T-cell (primary cell): ENCODE measurements at regions of chr12 and their contacts with region 1.

Region 1: DNA sequence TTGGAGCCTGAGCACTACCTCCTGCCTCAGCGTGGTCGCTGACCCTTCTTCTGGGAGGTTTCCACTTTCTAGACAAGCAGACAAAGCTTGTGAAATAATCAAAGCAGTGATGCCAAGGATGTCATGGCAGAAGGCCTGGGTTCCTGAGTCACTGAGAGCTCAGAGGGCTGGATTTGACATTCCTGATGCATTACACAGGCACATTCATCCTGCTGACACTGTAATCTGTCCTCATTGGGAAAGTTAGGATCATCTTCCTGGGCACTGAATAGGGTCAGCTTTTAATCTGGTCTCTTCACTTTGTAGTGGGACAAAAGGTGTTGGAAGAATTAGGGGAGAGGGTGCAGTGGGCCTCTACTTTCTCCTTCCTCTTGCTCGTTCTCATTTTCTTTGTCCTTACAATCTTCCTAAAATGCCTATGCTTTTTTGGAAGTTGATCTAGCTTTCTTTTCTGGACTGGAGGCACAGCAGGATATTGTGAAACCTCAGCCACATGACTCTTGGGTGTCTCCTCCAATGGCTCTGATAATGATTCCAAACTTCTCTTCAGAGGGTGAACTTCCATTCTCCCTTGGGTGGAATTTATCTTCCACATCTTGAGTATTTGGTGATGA is 29.6 kb downstream of the EEA1 start:
- DNase-seq: no peak
- ATAC-seq: no peak
- H3K4me3 ChIP-seq: no peak overlapping the region
- H3K4me3 Mint-ChIP-seq: no peak overlapping the region
- H3K27ac ChIP-seq: no peak overlapping the region
- H3K27ac Mint-ChIP-seq: peak overlapping the region; percentile 64 to 70
- H3K4me1 ChIP-seq: peaks cover 0 to 7% of the 10 kb centered on the region in 2 experiments
- H3K4me1 Mint-ChIP-seq: peaks cover 30 to 34% (median 33%) of the 10 kb centered on the region in 3 donors
- H3K27me3 ChIP-seq: no peaks in the 10 kb centered on the region
- H3K27me3 Mint-ChIP-seq: no peaks in the 10 kb centered on the region

Region 2: DNA sequence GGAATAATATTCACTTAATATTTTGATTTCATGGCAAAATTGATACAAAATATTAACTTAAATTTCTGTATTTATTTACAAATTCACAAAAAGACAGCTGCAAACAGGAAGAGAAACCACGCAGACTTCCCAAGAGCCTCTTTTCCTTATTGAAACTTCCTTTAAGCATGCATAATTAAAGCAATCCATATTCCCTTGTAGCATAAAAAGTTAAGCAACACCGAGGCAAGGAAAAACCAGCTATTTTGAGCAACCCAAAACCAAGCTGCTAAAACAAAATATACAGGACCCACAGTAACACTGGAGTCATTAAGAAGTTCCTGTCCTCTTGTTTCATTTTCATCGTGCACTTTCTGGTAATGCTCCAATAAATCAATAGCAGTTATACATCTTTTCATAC is 28.4 kb before region 1 on chr12:
- CTCF ChIA-PET with region 1: interaction called, 3 to 11 read pairs
- POLR2A ChIA-PET with region 1: no interaction called
- DNase-seq: no peak
- ATAC-seq: no peak
- H3K4me3 ChIP-seq: no peak overlapping the region
- H3K4me3 Mint-ChIP-seq: no peak overlapping the region
- H3K27ac ChIP-seq: no peak overlapping the region
- H3K27ac Mint-ChIP-seq: no peak overlapping the region
- H3K4me1 ChIP-seq: peaks cover 0 to 2% of the 10 kb centered on the region in 2 experiments
- H3K4me1 Mint-ChIP-seq: peaks cover 13 to 27% (median 22%) of the 10 kb centered on the region in 3 donors
- H3K27me3 ChIP-seq: no peaks in the 10 kb centered on the region
- H3K27me3 Mint-ChIP-seq: no peaks in the 10 kb centered on the region

Region 3: GRCh38 chr12:92886131-92886530 is 13.4 kb before region 1 on chr12:
- CTCF ChIA-PET with region 1: no interaction called
- POLR2A ChIA-PET with region 1: no interaction called
- DNase-seq: no peak
- ATAC-seq: no peak
- H3K4me3 ChIP-seq: no peak overlapping the region
- H3K4me3 Mint-ChIP-seq: no peak overlapping the region
- H3K27ac ChIP-seq: no peak overlapping the region
- H3K27ac Mint-ChIP-seq: no peak overlapping the region
- H3K4me1 ChIP-seq: no peaks in the 10 kb centered on the region
- H3K4me1 Mint-ChIP-seq: peaks cover 0 to 19% (median 10%) of the 10 kb centered on the region in 3 donors
- H3K27me3 ChIP-seq: no peaks in the 10 kb centered on the region
- H3K27me3 Mint-ChIP-seq: no peaks in the 10 kb centered on the region

Region 4: DNA sequence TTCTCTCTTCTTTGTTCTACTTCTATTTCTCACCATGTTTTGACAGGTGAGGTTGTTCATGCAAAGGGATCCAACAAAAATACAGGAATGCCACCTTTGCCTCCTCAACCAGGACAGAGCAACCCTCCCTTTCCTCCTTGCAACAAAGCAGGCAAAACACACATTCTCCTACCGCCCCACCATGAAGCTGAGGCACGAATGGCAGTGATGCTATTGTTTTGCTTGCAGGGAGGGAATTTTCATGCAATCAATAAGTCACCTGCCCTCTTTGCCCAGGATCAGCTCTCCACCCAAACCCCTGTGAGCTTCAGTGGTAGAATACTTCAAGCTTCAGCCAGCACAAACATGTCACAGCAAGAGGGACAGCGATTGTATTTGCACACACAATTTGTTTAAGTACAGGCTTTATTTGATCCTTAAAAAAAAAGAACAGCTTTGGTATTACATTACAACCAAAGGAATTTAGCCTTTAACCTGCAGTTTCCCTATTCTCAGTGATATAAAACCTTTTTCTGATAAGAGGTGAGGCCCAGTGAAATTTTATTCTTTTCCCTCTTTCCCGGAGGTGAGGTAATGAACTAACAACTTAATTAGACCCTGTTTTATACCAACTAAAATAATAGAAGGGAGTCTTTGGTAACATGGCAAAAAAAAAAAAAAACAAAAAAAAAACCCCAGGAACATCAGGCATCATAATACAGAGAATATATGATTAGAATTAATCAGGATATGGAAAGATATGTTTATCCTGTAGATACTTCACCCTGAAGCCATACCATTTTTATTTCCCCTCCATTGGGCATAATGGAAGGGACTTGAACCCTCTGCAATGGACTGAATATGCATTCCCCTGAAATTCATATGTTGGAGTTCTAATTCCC is 116.6 kb after region 1 on chr12:
- CTCF ChIA-PET with region 1: no interaction called
- POLR2A ChIA-PET with region 1: interaction called in 1 of 2 experiments, 12 read pairs
- DNase-seq: no peak
- ATAC-seq: no peak
- H3K4me3 ChIP-seq: no peak overlapping the region
- H3K4me3 Mint-ChIP-seq: no peak overlapping the region
- H3K27ac ChIP-seq: no peak overlapping the region
- H3K27ac Mint-ChIP-seq: no peak overlapping the region
- H3K4me1 ChIP-seq: no peaks in the 10 kb centered on the region
- H3K4me1 Mint-ChIP-seq: no peaks in the 10 kb centered on the region
- H3K27me3 ChIP-seq: peaks cover 0 to 5% of the 10 kb centered on the region in 2 experiments
- H3K27me3 Mint-ChIP-seq: peaks cover 0 to 5% of the 10 kb centered on the region in 2 donors